Transverse colon (tissue), 4 donors: ENCODE measurements at regions of chr3 and their contacts with region 1.

Region 1: GRCh38 chr3:17831366-17831765 is 88.9 kb upstream of the TBC1D5 start:
- DNase-seq: no peak
- H3K4me3 ChIP-seq: no peak overlapping the region
- H3K27ac ChIP-seq: no peak overlapping the region
- H3K4me1 ChIP-seq: no peaks in the 10 kb centered on the region
- H3K27me3 ChIP-seq: no peaks in the 10 kb centered on the region
- CTCF ChIP-seq: no peak
- EP300 ChIP-seq: no peak
- POLR2A ChIP-seq: no peak

Region 2: DNA sequence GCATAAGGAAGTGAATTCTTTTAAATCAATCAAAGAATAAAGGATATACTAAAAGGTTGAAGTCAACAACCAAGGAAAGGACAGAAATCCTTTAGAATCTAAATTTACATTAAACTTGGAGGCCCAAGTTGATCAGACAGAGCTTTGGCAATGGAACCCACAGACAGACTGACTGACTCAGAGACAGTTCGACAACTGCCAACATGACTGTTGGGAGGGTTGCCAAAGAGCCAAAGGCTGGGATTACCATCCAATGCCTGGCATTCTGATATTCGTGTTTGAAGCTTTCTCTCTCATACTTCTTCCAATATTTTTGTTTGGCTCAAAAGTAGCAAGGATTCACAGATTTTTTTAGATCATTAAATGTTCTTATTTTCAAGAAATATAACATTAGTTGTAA is 540.5 kb before region 1 on chr3:
- in situ Hi-C with region 1: no loop called
- intact Hi-C with region 1: no loop called
- DNase-seq: no peak
- H3K4me3 ChIP-seq: no peak overlapping the region
- H3K27ac ChIP-seq: no peak overlapping the region
- H3K4me1 ChIP-seq: no peaks in the 10 kb centered on the region
- H3K27me3 ChIP-seq: no peaks in the 10 kb centered on the region
- CTCF ChIP-seq: no peak
- EP300 ChIP-seq: no peak
- POLR2A ChIP-seq: no peak

Region 3: GRCh38 chr3:17431004-17431403 is 400.4 kb before region 1 on chr3:
- in situ Hi-C with region 1: loop called (anchors 10 to 25 kb)
- intact Hi-C with region 1: loop called (anchors 10 kb)
- DNase-seq: no peak
- H3K4me3 ChIP-seq: no peak overlapping the region
- H3K27ac ChIP-seq: no peak overlapping the region
- H3K4me1 ChIP-seq: no peaks in the 10 kb centered on the region
- H3K27me3 ChIP-seq: no peaks in the 10 kb centered on the region
- CTCF ChIP-seq: peak; percentile 35 to 47 (median 41)
- EP300 ChIP-seq: no peak
- POLR2A ChIP-seq: no peak

Region 4: DNA sequence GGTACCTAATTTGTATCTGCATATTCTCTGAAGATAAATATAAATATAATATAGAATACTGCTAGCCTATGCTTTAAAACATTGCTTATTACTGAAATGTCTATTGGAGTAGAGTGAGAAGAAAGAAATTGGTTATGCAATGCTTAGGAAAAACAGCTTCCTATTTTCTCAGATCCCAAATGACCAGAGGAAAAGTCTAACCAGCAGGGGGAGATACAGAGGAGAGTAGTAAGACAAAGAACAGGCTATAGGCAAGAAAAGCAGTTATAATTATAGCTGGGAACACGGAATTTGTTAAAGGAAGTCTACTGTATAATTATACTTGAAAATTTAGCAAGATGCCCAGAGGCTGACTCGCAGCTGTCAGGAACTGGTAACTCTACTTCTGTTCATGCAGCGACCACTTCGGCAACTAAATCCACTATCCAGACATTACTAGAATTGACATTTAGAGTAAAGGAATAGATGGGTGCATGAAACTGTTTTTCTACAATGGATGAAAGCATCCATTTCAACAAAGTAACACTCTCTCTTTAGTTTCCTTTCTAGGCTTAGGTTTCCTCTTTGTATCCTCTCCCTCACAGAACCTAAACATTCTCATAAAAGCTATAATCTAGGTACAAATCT is 186.2 kb before region 1 on chr3:
- in situ Hi-C with region 1: loop called (anchors 10 to 25 kb)
- intact Hi-C with region 1: no loop called
- DNase-seq: no peak
- H3K4me3 ChIP-seq: no peak overlapping the region
- H3K27ac ChIP-seq: no peak overlapping the region
- H3K4me1 ChIP-seq: peaks cover 0 to 15% (median 1%) of the 10 kb centered on the region in 4 donors
- H3K27me3 ChIP-seq: no peaks in the 10 kb centered on the region
- CTCF ChIP-seq: peak; percentile 62 to 73 (median 66)
- EP300 ChIP-seq: no peak
- POLR2A ChIP-seq: no peak